Psoas muscle (tissue), 8 donors: ENCODE measurements at regions of chr3 and their contacts with region 1.

Region 1: DNA sequence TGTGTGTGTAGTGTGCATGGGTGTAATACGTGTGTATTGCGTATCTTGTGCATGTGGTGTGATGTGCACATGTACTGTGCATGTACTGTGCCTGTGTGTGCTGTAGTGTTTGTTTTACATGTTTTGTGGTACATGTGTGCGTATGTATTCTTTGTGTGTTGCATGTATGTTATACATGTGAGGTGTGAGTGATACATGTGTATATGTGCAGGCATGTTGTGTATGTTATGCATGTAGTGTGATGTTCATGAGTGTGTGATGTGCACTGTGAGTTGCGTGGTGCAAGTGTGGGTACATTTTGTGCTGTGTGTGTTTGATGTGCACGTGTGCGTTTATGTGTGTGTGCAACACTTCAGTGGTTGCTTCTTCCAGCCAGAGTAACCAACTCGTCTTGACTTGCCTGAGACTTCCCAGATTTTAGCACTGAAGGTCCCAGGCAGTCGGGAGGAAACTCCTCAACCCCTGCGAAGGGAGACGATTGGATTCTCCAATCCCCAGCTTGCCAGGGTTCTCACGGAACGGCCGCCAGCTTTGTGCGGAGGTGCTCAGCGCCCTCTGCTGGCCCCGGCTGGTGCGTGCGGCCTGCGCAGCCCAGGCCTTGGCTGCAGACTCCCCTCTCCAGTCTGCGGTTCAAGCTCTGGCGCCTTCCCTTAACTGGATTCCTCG is 3.6 kb downstream of the GALNT15 start:
- DNase-seq: peak; percentile 86 to 92
- ATAC-seq: peak; percentile 58 to 68 (median 66)
- H3K4me3 ChIP-seq: peak overlapping the region; percentile 55
- H3K27ac ChIP-seq: no peak overlapping the region
- H3K4me1 ChIP-seq: peaks cover 49% of the 10 kb centered on the region
- H3K27me3 ChIP-seq: no peaks in the 10 kb centered on the region
- CTCF ChIP-seq: peak; percentile 97

Region 2: GRCh38 chr3:15815696-15816095 is 362.4 kb before region 1 on chr3:
- intact Hi-C with region 1: loop called (anchors 5 kb)
- DNase-seq: no peak
- ATAC-seq: peak in 3 of 4 donors; percentile 70 to 86 (median 80)
- H3K4me3 ChIP-seq: no peak overlapping the region
- H3K27ac ChIP-seq: peak overlapping the region; percentile 36
- H3K4me1 ChIP-seq: peaks cover 21% of the 10 kb centered on the region
- H3K27me3 ChIP-seq: no peaks in the 10 kb centered on the region
- CTCF ChIP-seq: peak; percentile 52

Region 3: DNA sequence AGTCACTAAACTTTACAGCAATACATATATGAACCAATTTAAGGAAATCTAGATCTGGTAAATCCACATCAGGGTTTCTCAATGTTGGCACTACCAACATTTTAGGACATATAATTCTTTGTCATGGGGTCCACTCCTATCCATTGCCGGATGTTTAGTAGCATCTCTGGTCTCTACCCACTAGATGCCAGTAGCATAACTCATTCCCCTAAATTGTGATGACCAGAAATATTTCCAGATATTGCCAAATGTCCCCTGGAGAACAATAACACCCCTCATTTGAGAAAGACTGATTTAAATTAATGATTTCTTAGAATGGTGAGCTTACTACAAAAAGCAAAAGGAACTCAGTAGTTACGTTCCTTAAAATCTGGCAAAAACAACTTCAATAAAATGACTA is 357.2 kb before region 1 on chr3:
- intact Hi-C with region 1: loop called (anchors 5 kb)
- DNase-seq: no peak
- ATAC-seq: peak in 3 of 4 donors; percentile 42 to 60 (median 43)
- H3K4me3 ChIP-seq: no peak overlapping the region
- H3K27ac ChIP-seq: no peak overlapping the region
- H3K4me1 ChIP-seq: peaks cover 40% of the 10 kb centered on the region
- H3K27me3 ChIP-seq: no peaks in the 10 kb centered on the region
- CTCF ChIP-seq: no peak

Region 4: DNA sequence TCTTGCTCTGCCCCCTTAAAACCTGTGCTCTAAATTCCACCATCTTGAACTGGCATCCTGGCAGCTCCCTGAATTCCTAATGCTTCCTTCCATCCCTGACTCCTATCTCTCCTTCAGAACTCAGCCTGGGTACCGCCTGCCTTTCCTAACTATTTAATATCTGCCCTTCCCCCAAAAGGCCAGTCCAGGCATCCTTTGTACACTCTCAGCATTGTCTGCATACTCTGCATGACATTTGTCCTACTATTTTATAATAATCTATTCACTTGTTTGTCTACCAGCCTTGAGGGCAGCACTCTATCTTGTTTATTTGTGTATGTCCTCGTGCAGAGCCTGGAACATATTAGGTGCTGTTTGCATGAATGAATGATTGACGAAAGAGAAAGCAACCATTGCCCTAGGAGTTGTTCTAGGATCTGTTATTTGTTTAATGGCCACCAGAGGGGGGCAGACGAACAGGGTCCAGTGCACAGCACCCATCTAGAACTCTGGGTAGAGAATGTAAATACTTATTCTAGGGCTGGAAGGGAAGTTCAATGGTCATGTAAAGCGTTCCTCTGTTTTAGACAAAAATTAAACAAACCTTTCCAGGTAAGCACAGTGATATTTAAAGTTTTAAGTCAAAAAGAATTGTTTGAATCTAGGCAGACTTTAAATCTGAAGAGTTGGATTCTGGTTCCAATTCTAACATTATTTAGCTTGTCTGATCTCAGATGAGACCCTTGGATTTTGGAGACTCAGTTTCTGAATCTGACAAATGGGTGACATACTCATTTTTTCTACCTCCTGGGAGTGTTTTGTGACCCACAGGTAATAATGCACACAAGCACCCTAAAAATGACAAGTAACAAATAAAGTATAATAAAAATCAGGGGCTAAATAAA is 129.4 kb before region 1 on chr3:
- intact Hi-C with region 1: loop called (anchors 1 to 2 kb)
- DNase-seq: no peak
- ATAC-seq: peak; percentile 88 to 94 (median 94)
- H3K4me3 ChIP-seq: peak overlapping the region; percentile 43
- H3K27ac ChIP-seq: peak overlapping the region; percentile 12
- H3K4me1 ChIP-seq: peaks cover 28% of the 10 kb centered on the region
- H3K27me3 ChIP-seq: no peaks in the 10 kb centered on the region
- CTCF ChIP-seq: peak; percentile 89

Region 5: GRCh38 chr3:16151109-16151765 is 26.9 kb before region 1 on chr3:
- intact Hi-C with region 1: loop called in 1 of 2 experiments (anchors 2 kb)
- DNase-seq: peak; percentile 86 to 94
- ATAC-seq: peak; percentile 79 to 94 (median 92)
- H3K4me3 ChIP-seq: no peak overlapping the region
- H3K27ac ChIP-seq: peak overlapping the region; percentile 78
- H3K4me1 ChIP-seq: peaks cover 43% of the 10 kb centered on the region
- H3K27me3 ChIP-seq: no peaks in the 10 kb centered on the region
- CTCF ChIP-seq: no peak

Region 6: GRCh38 chr3:16247276-16248061 is 69.4 kb after region 1 on chr3:
- intact Hi-C with region 1: loop called (anchors 2 to 5 kb)
- DNase-seq: peak; percentile 75 to 84
- ATAC-seq: peak; percentile 49 to 69 (median 63)
- H3K4me3 ChIP-seq: no peak overlapping the region
- H3K27ac ChIP-seq: no peak overlapping the region
- H3K4me1 ChIP-seq: peaks cover 27% of the 10 kb centered on the region
- H3K27me3 ChIP-seq: no peaks in the 10 kb centered on the region
- CTCF ChIP-seq: peak; percentile 96